CD4-positive, alpha-beta memory T cell (primary cell): ENCODE measurements at regions of chr1 and their contacts with region 1.

Region 1: GRCh38 chr1:30779294-30780071 is 21.9 kb upstream of the LAPTM5 start:
- DNase-seq: peak; percentile 82 to 91 (median 85)
- H3K4me3 ChIP-seq: no peak overlapping the region
- H3K4me3 Mint-ChIP-seq: peak overlapping the region in 3 of 8 donors; percentile 11 to 35 (median 35)
- H3K27ac ChIP-seq: no peak overlapping the region
- H3K27ac Mint-ChIP-seq: peak overlapping the region in 4 of 7 donors; percentile 39 to 76 (median 64)
- H3K4me1 ChIP-seq: peaks cover 21% of the 10 kb centered on the region
- H3K4me1 Mint-ChIP-seq: peaks cover 5 to 11% (median 8%) of the 10 kb centered on the region in 4 donors
- H3K27me3 ChIP-seq: no peaks in the 10 kb centered on the region
- H3K27me3 Mint-ChIP-seq: peaks cover 0 to 2% of the 10 kb centered on the region in 2 donors

Region 2: DNA sequence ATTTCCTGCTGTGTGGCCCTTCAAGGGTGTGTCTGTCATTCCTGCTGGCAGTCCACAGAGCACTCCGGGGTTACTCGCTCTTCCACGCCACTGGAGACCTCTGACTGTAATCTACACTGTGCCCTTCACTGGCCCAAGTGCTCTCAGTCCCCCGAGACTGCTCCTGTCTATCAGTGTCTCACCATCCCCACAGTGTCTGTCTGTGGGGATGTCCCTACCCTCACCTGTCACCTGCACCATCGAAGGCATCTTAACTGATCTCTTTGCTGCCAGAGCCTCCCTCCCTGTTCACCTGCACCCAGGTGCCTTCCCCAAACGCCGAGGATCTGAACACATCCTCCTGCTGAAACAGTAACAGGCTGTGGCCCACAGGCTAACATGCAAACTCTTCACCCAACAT is 192.8 kb before region 1 on chr1:
- CTCF ChIA-PET with region 1: no interaction called
- POLR2A ChIA-PET with region 1: no interaction called
- intact Hi-C with region 1: no loop called
- DNase-seq: no peak
- H3K4me3 ChIP-seq: no peak overlapping the region
- H3K4me3 Mint-ChIP-seq: no peak overlapping the region
- H3K27ac ChIP-seq: no peak overlapping the region
- H3K27ac Mint-ChIP-seq: no peak overlapping the region
- H3K4me1 ChIP-seq: no peaks in the 10 kb centered on the region
- H3K4me1 Mint-ChIP-seq: no peaks in the 10 kb centered on the region
- H3K27me3 ChIP-seq: peaks cover 7% of the 10 kb centered on the region
- H3K27me3 Mint-ChIP-seq: peaks cover 33 to 44% of the 10 kb centered on the region in 2 donors

Region 3: GRCh38 chr1:30732277-30732996 is 47.0 kb before region 1 on chr1:
- CTCF ChIA-PET with region 1: interaction called, 687 read pairs
- POLR2A ChIA-PET with region 1: interaction called, 5 read pairs
- intact Hi-C with region 1: no loop called
- DNase-seq: peak in 1 of 5 donors; percentile 54
- H3K4me3 ChIP-seq: no peak overlapping the region
- H3K4me3 Mint-ChIP-seq: peak overlapping the region in 2 of 8 donors; percentile 25 to 26
- H3K27ac ChIP-seq: no peak overlapping the region
- H3K27ac Mint-ChIP-seq: peak overlapping the region; percentile 5 to 83 (median 74)
- H3K4me1 ChIP-seq: peaks cover 16% of the 10 kb centered on the region
- H3K4me1 Mint-ChIP-seq: peaks cover 8 to 32% (median 22%) of the 10 kb centered on the region in 4 donors
- H3K27me3 ChIP-seq: no peaks in the 10 kb centered on the region
- H3K27me3 Mint-ChIP-seq: no peaks in the 10 kb centered on the region

Region 4: DNA sequence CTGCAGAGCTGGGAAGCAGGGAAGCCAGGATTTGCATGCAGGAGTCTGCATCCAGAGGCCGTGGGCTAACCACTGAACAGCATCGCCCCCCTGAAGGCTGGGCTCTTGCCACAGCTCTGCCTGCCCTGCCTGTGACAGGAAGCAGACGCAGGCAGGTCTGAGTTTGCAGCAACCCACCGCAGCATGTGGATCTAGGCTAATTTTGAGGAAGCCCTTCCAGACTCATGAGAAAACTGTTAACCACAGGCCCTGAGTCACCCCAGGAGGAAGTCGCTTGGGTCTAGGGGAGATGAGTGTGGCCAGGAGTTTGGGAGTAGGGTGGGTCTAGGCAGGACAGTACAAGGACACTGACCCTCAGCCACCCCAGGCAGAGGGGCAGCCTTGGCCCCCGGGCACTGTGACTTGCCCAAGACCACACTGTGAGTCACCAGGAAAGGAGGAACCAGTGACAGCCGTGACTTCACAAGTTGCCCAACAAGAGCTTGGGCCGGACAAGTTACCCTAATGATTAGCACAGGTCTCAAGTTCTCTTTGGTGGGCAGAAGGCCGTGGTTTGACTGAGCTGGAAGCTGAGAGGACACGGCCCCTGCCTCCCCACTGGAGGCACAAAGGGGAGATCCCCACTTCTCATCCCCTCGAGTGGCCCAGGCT is 22.8 kb before region 1 on chr1:
- CTCF ChIA-PET with region 1: interaction called, 270 read pairs
- POLR2A ChIA-PET with region 1: interaction called, 21 read pairs
- intact Hi-C with region 1: loop called (anchors 1 kb)
- DNase-seq: peak; percentile 69 to 94 (median 75)
- H3K4me3 ChIP-seq: peak overlapping the region; percentile 96
- H3K4me3 Mint-ChIP-seq: peak overlapping the region; percentile 97 to 100 (median 100)
- H3K27ac ChIP-seq: peak overlapping the region; percentile 92
- H3K27ac Mint-ChIP-seq: peak overlapping the region; percentile 95 to 100 (median 98)
- H3K4me1 ChIP-seq: peaks cover 84% of the 10 kb centered on the region
- H3K4me1 Mint-ChIP-seq: peaks cover 57 to 100% (median 69%) of the 10 kb centered on the region in 4 donors
- H3K27me3 ChIP-seq: no peaks in the 10 kb centered on the region
- H3K27me3 Mint-ChIP-seq: no peaks in the 10 kb centered on the region

Region 5: GRCh38 chr1:30911046-30911954 is 131.8 kb after region 1 on chr1:
- CTCF ChIA-PET with region 1: interaction called, 11 read pairs
- POLR2A ChIA-PET with region 1: interaction called, 3 read pairs
- intact Hi-C with region 1: loop called (anchors 2 kb)
- DNase-seq: peak in 3 of 5 donors; percentile 27 to 32 (median 32)
- H3K4me3 ChIP-seq: no peak overlapping the region
- H3K4me3 Mint-ChIP-seq: peak overlapping the region in 3 of 8 donors; percentile 14 to 36 (median 21)
- H3K27ac ChIP-seq: no peak overlapping the region
- H3K27ac Mint-ChIP-seq: no peak overlapping the region
- H3K4me1 ChIP-seq: peaks cover 15% of the 10 kb centered on the region
- H3K4me1 Mint-ChIP-seq: peaks cover 9 to 19% (median 14%) of the 10 kb centered on the region in 4 donors
- H3K27me3 ChIP-seq: peaks cover 17% of the 10 kb centered on the region
- H3K27me3 Mint-ChIP-seq: peaks cover 9 to 18% of the 10 kb centered on the region in 2 donors

Region 6: DNA sequence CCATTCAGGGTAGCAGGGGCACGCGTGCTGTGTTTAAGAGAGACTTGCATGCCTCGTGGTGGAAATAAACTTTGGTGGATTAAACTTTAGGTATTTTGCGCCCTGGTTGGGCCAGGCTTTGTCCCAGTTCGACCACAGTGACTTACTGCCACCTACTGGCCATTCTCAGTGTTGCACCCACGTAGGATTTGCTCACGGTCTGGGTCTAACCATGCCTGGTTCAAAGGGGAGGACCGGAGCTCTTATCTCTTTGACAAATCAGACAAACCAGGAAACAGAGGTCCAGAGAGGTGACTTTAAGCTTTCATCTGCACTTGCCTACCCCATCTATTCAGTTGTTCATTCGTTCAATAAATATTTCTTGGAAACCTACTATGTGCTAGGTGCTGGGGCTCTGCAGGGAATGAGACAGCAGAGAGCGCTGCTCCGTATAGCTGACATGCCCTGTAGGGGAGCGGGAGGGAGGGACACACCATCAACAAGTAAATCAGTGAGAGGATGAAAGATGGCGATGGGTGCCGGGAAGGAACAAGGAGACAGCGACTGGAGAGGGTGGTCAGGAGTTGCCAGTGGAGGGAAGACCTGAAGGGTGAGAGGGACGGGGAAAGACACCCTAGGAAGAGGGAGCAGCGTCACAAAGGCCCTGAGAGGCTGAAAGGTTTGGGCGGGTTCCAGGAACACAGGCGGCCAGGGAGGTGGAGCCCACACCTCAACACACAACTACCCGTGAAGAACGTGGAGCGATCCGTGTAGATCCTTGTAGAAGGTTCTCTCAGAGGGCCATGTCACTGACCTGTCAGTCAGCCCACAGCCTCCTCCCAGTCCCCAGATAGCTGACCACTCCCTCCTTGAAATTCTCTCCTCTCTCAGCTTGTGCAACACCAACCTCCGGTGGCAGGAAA is 769.7 kb after region 1 on chr1:
- CTCF ChIA-PET with region 1: no interaction called
- POLR2A ChIA-PET with region 1: no interaction called
- intact Hi-C with region 1: loop called (anchors 5 kb)
- DNase-seq: peak; percentile 79 to 86 (median 84)
- H3K4me3 ChIP-seq: no peak overlapping the region
- H3K4me3 Mint-ChIP-seq: peak overlapping the region; percentile 37 to 75 (median 54)
- H3K27ac ChIP-seq: no peak overlapping the region
- H3K27ac Mint-ChIP-seq: no peak overlapping the region
- H3K4me1 ChIP-seq: peaks cover 11% of the 10 kb centered on the region
- H3K4me1 Mint-ChIP-seq: peaks cover 6 to 9% (median 8%) of the 10 kb centered on the region in 4 donors
- H3K27me3 ChIP-seq: no peaks in the 10 kb centered on the region
- H3K27me3 Mint-ChIP-seq: peaks cover 2 to 4% of the 10 kb centered on the region in 2 donors